Calu3 (cell line): ENCODE measurements at regions of chr16 and their contacts with region 1.

Region 1: DNA sequence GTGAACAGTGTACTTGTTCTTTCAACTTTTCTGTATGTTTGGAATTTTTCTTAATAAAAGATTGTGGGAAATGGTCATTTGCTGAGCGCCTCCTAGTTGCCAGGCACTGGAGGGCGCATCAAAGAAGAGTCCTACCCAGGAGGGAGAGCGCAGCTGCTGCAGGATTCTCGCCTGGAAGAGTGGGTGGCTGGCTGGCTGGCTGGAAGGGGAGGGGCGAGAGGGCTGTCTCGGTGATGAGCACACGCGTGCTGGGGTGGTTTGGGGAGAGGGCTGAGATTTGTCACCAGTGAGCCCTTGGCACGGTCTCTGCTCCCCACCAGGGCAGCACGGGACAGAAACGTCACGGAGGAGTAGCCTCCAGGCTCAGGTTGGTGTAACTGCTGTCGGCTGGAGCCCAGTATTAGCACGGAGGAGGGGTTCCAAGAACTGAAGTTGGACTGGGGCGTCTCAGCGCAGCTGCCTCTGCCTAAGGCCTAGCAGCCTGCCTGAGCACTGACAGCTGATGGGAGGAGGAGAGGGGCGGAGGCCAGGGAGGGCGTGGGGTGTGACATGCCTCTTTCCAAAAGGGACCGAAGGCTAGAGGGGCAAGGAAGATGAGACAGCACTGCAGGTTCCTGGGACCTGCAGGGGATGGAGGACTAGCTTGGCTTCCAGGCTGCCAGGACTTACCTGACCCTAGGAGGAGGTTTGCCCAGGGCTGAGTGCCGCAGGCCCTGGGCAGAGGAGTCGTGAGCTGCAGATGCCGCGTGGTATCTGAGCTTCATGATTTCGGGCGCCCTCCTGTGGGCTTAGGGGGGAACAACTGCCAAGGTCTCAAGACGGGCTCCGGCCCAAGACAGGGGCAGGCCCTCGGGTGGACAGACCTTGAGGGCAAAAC is 5.7 kb downstream of the LDHD start:
- DNase-seq: peak; percentile 91
- H3K4me3 Mint-ChIP-seq: no peak overlapping the region
- H3K27ac Mint-ChIP-seq: no peak overlapping the region
- H3K4me1 Mint-ChIP-seq: peaks cover 31% of the 10 kb centered on the region
- H3K27me3 Mint-ChIP-seq: no peaks in the 10 kb centered on the region
- CTCF ChIP-seq: peak; percentile 91

Region 2: DNA sequence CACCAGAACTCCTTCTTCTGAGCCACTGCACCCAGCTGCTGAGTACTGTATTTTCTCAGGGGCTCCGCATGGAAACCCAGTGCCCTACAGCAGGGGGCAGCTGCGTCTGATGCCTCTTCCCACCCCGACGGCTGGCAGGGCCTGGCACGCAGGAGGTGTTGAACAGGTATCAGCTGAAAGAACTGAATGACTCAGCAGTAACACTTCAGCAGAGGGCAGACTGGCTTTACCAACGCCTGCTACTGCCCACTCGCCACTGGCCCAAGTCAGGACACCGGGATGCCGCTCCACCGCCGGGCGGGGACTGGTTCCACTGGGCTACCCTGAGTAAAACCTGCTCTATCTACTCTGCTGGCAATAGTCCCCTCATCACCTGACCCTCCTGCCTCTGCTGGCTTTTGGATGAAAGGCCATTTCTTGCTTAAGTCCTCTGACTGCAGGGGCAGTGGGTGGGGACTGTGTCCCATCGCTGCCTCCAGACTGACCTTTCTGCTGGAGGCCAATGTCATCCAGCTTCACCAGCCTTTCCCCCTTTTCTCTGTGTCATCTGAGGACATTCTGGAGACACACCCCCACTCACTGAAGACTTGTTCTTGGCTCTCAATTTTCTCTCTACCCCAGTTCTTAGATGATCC is 235.8 kb before region 1 on chr16:
- CTCF ChIA-PET with region 1: interaction called, 3 read pairs
- intact Hi-C with region 1: loop called (anchors 10 kb)
- DNase-seq: peak; percentile 48
- H3K4me3 Mint-ChIP-seq: peak overlapping the region; percentile 8
- H3K27ac Mint-ChIP-seq: peak overlapping the region; percentile 7
- H3K4me1 Mint-ChIP-seq: peaks cover 16% of the 10 kb centered on the region
- H3K27me3 Mint-ChIP-seq: no peaks in the 10 kb centered on the region
- CTCF ChIP-seq: no peak

Region 3: GRCh38 chr16:74998481-74999218 is 112.2 kb before region 1 on chr16 and contains the start of gene ZNRF1:
- CTCF ChIA-PET with region 1: interaction called, 125 read pairs
- intact Hi-C with region 1: loop called (anchors 1 kb)
- DNase-seq: peak; percentile 88
- H3K4me3 Mint-ChIP-seq: peak within 1 kb of the TSS; percentile 72
- H3K27ac Mint-ChIP-seq: peak within 1 kb of the TSS; percentile 63
- H3K4me1 Mint-ChIP-seq: peaks cover 46% of the 10 kb centered on the region
- H3K27me3 Mint-ChIP-seq: peaks cover 9% of the 10 kb centered on the region
- CTCF ChIP-seq: peak; percentile 92
- total RNA-seq, gene ZNRF1: 27.1 and 27.5 TPM in 2 replicates

Region 4: DNA sequence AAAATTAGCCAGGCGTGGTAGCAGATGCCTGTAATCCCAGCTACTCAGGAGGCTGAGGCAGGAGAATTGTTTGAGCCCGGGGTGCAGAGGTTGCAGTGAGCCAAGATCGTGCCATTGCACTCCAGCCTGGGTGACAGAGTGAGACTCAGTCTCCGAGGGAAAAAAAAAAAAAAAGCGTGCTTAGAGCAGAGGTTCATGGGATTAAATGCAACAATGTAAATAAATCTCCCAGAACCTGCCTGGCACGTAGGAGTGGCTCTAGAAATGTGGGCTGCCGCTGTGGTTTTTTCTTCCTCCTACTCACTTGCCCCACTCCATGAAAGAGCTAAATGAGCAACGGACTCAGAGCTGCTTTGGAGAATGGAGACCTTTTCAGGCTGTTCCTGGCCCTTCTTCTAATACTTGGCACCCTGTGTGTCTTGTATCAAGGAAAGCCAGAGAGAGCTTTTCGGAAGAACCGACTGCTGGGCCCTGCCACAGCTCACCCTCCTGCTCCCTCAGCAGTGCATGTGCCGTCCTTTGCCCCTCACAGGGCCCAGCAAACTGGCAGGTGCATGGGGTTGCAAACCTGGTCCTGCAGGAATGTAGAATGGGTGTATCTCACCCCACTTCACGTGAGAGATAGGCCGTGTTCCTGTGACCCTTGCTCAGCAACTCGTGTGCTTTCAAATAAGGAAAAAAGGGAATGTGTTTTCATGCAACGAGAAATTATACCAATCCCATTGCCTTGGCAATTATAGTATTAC is 46.3 kb before region 1 on chr16:
- CTCF ChIA-PET with region 1: interaction called, 10 read pairs
- intact Hi-C with region 1: no loop called
- DNase-seq: peak; percentile 66
- H3K4me3 Mint-ChIP-seq: peak overlapping the region; percentile 45
- H3K27ac Mint-ChIP-seq: peak overlapping the region; percentile 36
- H3K4me1 Mint-ChIP-seq: peaks cover 25% of the 10 kb centered on the region
- H3K27me3 Mint-ChIP-seq: no peaks in the 10 kb centered on the region
- CTCF ChIP-seq: no peak

Region 5: DNA sequence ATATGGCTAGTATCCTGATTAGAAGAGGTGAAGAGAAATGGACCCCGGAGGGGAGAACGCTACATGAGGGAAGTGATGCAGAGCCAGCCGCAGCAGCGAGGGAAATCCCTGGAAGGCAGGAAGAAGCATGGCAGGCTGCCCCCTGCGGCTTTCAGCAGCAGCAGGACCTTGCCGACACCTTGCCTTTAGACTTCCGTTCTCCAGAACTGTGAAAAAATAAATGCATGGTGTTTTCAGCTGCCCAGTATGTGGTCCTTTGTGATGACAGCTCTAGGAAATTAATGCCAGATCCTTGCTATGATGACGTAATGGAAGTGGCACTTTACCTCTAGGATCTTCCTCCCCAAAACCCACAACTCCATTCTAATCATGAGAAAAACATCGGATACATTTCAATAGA is 27.8 kb after region 1 on chr16:
- CTCF ChIA-PET with region 1: no interaction called
- intact Hi-C with region 1: no loop called
- DNase-seq: no peak
- H3K4me3 Mint-ChIP-seq: no peak overlapping the region
- H3K27ac Mint-ChIP-seq: no peak overlapping the region
- H3K4me1 Mint-ChIP-seq: no peaks in the 10 kb centered on the region
- H3K27me3 Mint-ChIP-seq: peaks cover 22% of the 10 kb centered on the region
- CTCF ChIP-seq: no peak

Region 6: GRCh38 chr16:75305364-75306098 is 194.7 kb after region 1 on chr16:
- CTCF ChIA-PET with region 1: no interaction called
- intact Hi-C with region 1: no loop called
- DNase-seq: peak; percentile 92
- H3K4me3 Mint-ChIP-seq: peak overlapping the region; percentile 63
- H3K27ac Mint-ChIP-seq: peak overlapping the region; percentile 99
- H3K4me1 Mint-ChIP-seq: peaks cover 63% of the 10 kb centered on the region
- H3K27me3 Mint-ChIP-seq: no peaks in the 10 kb centered on the region
- CTCF ChIP-seq: no peak